HEK293 (cell line): ENCODE measurements at regions of chr5 and their contacts with region 1.

Region 1: DNA sequence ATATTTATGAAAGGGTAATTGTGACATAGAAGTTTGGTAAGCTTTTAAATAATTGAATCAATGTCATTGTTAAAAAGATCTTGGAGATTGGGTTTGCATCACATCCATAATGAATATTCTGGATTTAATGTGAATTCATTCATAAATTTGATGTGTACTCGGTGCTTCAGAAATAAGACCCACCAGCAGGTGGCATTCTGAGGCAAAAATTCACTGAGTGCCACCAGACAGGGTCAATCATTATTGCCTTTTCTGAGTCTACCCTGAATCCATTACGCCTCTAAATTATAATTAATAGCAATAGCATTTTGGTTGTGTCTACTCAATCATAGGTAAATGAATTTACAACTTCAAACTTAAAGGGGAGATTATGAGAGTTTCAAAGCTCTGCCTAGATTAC is 1.0 kb downstream of the TRPC7 start:
- H3K4me3 ChIP-seq: no peak overlapping the region
- H3K27ac ChIP-seq: no peak overlapping the region
- H3K4me1 ChIP-seq: no peaks in the 10 kb centered on the region
- CTCF ChIP-seq: no peak

Region 2: GRCh38 chr5:136166909-136167308 is 197.4 kb before region 1 on chr5:
- CTCF ChIA-PET with region 1: no interaction called
- POLR2A ChIA-PET with region 1: no interaction called
- H3K4me3 ChIP-seq: no peak overlapping the region
- H3K27ac ChIP-seq: no peak overlapping the region
- H3K4me1 ChIP-seq: no peaks in the 10 kb centered on the region
- CTCF ChIP-seq: no peak

Region 3: GRCh38 chr5:136424835-136425584 is 60.7 kb after region 1 on chr5:
- CTCF ChIA-PET with region 1: interaction called, 10 read pairs
- POLR2A ChIA-PET with region 1: no interaction called
- H3K4me3 ChIP-seq: no peak overlapping the region
- H3K27ac ChIP-seq: no peak overlapping the region
- H3K4me1 ChIP-seq: peaks cover 17% of the 10 kb centered on the region
- CTCF ChIP-seq: peak; percentile 85

Region 4: DNA sequence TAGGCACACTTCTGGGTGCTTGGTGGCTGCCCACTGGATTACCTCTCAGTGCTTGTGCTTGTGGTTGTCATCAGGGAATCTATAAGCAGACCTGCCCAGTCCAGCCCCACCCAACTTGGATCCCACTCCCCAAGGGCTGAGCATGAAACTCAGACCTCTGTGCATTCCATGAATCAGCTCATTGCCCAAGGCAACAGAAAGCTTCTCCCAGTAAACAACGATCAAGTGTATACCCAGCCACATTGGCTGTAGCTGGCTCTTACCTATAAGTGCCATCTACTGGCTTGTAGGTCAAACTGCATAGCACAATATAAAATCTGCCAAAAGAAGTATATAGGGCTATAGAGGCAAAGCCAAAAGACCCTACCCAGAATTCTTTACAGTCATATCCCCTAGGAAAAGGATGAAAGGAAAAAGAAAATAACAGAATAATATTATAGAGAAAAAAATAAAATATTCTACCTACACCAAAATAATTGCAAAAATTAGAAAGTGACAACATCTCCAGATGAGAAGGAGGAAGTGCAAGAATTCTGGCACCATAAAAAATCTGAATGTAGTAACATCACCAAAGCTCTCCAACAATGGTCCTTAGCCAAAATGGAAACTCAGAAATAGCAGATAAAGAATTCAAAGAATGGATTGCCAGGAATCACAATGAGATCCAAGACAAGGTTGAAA is 322.0 kb after region 1 on chr5:
- CTCF ChIA-PET with region 1: interaction called, 15 read pairs
- POLR2A ChIA-PET with region 1: no interaction called
- H3K4me3 ChIP-seq: no peak overlapping the region
- H3K27ac ChIP-seq: no peak overlapping the region
- H3K4me1 ChIP-seq: peaks cover 3% of the 10 kb centered on the region; the same call in 1 of the 2 replicates
- CTCF ChIP-seq: peak; percentile 20; the same call in 1 of the 2 replicates